Mammary epithelial cell (primary cell): ENCODE measurements at regions of chr14 and their contacts with region 1.

Region 1: DNA sequence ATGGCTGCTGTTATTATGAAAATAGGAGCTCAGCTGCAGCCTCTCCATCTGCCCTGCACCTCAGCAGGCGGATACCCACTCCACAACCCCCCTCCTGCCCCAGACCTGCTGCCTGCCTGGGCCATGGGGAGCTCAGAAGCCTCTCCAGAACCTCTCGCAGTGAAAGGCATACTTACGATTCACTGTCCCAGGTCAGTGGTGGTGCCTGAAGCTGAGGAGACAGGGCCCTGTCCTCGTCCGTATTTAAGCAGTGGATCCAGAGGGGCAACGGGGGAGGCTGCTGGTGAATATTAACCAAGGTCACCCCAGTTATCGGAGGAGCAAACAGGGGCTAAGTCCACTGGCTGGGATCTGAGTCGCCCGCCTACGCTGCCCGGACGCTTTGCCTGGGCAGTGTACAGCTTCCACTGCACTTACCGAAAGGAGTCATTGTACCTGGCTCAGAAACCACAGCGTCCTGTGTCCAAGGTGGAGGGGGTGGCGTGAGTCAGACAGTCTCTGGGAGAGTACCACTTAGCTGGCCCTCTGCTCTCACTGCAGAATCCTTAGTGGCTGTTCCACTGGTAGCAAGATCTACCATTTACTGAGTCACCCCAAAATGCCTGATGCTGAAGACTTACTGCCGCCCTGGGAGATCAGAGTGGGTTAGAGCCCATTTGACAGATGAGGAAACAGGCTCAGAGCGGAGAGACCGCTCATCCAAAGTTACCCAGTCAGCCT is at the start of gene SERPINA1:
- DNase-seq: peak; percentile 97
- H3K4me3 ChIP-seq: peak within 1 kb of the TSS; percentile 28 to 48 (median 35)
- H3K27ac ChIP-seq: peak within 1 kb of the TSS; percentile 55
- H3K4me1 ChIP-seq: peaks cover 35% of the 10 kb centered on the region
- H3K27me3 ChIP-seq: no peaks in the 10 kb centered on the region
- CTCF ChIP-seq: no peak
- total RNA-seq, gene SERPINA1: 30.3 to 155 TPM

Region 2: GRCh38 chr14:94345337-94346064 is 43.0 kb before region 1 on chr14:
- CTCF ChIA-PET with region 1: no interaction called
- dilution Hi-C with region 1: no loop called
- in situ Hi-C with region 1: no loop called
- intact Hi-C with region 1: loop called (anchors 1 kb)
- DNase-seq: peak; percentile 91
- H3K4me3 ChIP-seq: no peak overlapping the region
- H3K27ac ChIP-seq: peak overlapping the region; percentile 66
- H3K4me1 ChIP-seq: peaks cover 48% of the 10 kb centered on the region
- H3K27me3 ChIP-seq: no peaks in the 10 kb centered on the region
- CTCF ChIP-seq: no peak

Region 3: DNA sequence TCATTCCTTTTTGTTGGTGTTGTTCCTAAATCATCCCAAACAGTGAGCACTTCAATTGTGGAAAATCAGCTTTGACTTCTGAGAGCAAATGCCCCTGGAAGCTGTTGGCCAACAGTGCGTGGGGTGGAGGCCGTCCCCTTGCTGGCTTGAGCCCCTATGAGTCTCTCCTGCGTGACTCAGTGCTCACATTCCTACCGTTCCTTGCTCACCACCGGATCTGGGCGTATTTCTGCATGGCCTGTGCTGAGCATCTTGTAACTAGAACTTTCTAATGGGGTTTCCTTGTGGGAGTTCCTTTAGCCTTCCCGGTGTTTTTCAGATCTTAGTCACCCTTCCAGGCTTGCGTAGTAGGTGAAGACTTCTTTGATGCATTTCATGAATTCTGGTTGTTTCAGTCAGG is 14.8 kb before region 1 on chr14:
- CTCF ChIA-PET with region 1: interaction called, 3 read pairs
- dilution Hi-C with region 1: no loop called
- in situ Hi-C with region 1: no loop called
- intact Hi-C with region 1: loop called (anchors 1 kb)
- DNase-seq: peak; percentile 98
- H3K4me3 ChIP-seq: no peak overlapping the region
- H3K27ac ChIP-seq: peak overlapping the region; percentile 74
- H3K4me1 ChIP-seq: peaks cover 25% of the 10 kb centered on the region
- H3K27me3 ChIP-seq: no peaks in the 10 kb centered on the region
- CTCF ChIP-seq: no peak